ENCODE measurements at regions of chr1 and their contacts with region 1.

Region 1: DNA sequence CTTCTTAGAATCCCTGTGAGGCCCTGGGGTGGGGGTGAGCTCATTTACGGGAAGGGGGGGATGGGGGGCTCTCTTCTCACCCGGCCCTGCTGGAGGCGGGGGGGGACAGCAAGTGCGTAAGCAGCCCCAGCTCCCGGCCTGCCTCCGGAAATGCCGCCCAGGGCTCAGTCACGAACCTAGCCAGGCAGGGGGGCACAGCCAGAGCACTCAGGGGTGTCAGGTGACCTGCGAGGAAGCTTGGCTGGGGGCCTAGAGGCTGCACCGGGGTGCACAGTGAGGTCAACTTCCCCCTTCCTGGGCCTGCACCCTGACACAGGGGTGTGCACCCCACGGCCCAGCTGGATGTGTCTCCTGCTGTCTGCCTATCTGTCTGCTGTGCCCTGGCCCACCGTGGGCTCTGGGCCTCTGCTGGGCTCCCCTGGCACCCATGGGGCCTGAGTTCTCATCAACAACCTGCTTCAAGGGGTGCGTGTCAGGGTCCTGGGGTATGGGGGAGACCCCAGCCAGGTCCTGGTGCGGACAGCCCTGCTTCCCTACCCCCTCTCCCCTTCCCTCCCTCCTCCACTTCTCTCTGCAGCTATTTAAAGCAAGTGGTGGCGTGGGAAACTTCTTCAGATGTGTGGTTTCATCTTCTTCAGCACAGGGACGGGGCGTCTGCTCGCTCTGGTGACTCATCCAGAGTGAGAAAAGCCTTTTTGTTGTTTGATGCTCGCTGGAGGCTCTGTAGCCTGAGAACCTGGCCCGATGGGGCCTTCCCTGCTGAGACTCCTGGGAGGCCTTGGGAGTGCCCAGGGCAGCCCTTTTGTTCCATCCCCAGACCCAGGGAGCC is 92.5 kb upstream of the RUNX3 start:
- DNase-seq: peak; percentile 97
- H3K4me3 Mint-ChIP-seq: peak overlapping the region; percentile 77
- H3K27ac Mint-ChIP-seq: peak overlapping the region; percentile 97
- H3K4me1 Mint-ChIP-seq: peaks cover 84% of the 10 kb centered on the region
- H3K27me3 Mint-ChIP-seq: no peaks in the 10 kb centered on the region

Region 2: DNA sequence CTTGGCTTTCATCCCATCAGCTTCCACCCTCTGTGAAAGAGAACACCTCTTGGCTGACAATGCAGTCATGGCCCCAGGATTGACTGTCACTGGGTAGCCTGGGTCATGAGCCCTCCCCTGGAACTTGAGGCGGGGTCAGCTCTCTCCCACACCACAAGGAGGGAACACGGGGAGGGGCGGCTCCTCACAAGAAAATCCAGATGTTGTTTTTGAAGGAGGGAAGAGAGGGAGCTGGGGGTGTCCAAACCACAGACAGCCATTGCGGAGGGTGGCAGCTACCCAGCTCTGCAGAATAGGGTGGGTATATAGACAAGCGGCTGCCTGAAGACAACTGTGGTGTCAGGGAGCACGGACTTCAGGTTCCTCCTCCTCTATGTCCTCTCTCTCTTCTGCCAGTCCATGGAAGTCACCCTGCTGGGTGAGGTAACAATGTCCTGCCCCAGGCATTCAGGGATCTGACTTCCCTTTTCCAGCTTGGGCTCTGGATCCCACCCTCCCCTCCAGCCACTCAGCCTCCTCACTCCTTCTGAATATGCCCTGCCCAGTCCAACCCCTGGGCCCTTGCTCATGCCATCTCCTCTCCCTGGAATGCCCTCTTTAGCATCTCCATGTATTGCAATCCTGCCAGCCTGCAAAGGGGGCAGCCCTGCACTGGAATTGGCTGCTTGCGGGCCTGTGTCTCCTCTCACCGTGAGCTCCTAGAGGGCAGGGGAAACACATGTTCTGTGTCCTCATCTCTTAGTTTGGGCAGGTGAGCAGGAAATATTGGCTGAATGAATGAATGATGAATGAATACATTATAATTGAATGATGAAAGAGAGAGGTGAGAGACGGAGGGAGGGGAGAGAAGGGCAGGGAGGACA is 31.6 kb before region 1 on chr1:
- CTCF ChIA-PET with region 1: interaction called, 3 read pairs
- POLR2A ChIA-PET with region 1: interaction called, 5 read pairs
- intact Hi-C with region 1: loop called (anchors 1 kb)
- DNase-seq: peak; percentile 41
- H3K4me3 Mint-ChIP-seq: no peak overlapping the region
- H3K27ac Mint-ChIP-seq: peak overlapping the region; percentile 94
- H3K4me1 Mint-ChIP-seq: peaks cover 82% of the 10 kb centered on the region
- H3K27me3 Mint-ChIP-seq: no peaks in the 10 kb centered on the region

Region 3: GRCh38 chr1:25167331-25168199 is 145.0 kb after region 1 on chr1:
- CTCF ChIA-PET with region 1: no interaction called
- POLR2A ChIA-PET with region 1: no interaction called
- intact Hi-C with region 1: no loop called
- DNase-seq: no peak
- H3K4me3 Mint-ChIP-seq: no peak overlapping the region
- H3K27ac Mint-ChIP-seq: no peak overlapping the region
- H3K4me1 Mint-ChIP-seq: no peaks in the 10 kb centered on the region
- H3K27me3 Mint-ChIP-seq: no peaks in the 10 kb centered on the region

Region 4: DNA sequence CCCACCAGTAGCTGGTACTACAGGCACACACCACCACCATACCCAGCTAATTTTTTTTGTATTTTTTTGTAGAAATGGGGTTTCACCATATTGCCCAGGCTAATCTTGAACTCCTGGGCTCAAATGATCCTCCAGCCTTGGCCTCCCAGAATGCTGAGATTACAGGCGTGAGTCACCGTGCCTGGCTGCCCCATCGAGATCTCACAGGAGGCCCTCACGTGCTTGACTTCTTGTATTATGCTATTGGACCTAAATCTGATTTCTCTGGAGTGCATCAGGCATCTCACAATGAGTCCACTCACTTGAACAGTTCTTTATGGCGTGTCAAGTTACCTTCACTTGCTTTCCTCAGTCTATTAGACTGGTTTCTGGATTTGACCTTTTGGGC is 234.0 kb after region 1 on chr1:
- CTCF ChIA-PET with region 1: no interaction called
- POLR2A ChIA-PET with region 1: no interaction called
- intact Hi-C with region 1: no loop called
- DNase-seq: no peak
- H3K4me3 Mint-ChIP-seq: no peak overlapping the region
- H3K27ac Mint-ChIP-seq: no peak overlapping the region
- H3K4me1 Mint-ChIP-seq: peaks cover 17% of the 10 kb centered on the region
- H3K27me3 Mint-ChIP-seq: no peaks in the 10 kb centered on the region